ENCODE measurements at regions of chr22 and their contacts with region 1.

Region 1: DNA sequence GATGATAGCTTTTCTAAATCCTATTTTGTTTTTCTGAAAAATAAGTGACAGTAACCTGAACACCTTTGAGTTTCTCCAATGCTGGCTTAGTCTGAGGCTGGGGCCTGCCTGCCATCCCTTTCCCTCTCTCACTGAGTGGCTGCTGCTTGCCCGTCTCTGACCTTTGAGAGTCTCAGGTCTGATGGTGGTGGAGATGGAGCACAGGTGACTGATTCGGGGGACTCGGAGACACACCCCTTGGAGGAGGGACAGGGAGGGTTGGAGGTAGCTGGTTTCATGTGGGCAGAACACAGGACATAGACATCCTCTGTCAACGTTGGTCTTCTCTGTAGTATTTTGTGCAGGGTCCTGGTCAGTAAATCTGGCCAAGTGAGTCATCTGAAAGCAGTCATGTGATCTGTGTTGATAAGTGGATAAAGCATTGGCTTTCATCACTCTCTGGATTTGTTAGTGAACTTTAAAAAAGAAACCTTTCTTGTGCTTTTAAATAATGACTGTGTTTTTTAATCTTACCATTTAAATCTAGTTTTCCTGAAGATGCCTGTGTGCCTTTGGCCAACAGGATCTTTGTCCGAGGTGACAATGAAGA is 47.1 kb upstream of the CLDN5 start:
- DNase-seq: no peak
- ATAC-seq: no peak
- H3K4me3 ChIP-seq: no peak overlapping the region
- H3K27ac ChIP-seq: peak overlapping the region; percentile 46
- H3K4me1 ChIP-seq: no peaks in the 10 kb centered on the region
- H3K27me3 ChIP-seq: no peaks in the 10 kb centered on the region
- CTCF ChIP-seq: no peak

Region 2: DNA sequence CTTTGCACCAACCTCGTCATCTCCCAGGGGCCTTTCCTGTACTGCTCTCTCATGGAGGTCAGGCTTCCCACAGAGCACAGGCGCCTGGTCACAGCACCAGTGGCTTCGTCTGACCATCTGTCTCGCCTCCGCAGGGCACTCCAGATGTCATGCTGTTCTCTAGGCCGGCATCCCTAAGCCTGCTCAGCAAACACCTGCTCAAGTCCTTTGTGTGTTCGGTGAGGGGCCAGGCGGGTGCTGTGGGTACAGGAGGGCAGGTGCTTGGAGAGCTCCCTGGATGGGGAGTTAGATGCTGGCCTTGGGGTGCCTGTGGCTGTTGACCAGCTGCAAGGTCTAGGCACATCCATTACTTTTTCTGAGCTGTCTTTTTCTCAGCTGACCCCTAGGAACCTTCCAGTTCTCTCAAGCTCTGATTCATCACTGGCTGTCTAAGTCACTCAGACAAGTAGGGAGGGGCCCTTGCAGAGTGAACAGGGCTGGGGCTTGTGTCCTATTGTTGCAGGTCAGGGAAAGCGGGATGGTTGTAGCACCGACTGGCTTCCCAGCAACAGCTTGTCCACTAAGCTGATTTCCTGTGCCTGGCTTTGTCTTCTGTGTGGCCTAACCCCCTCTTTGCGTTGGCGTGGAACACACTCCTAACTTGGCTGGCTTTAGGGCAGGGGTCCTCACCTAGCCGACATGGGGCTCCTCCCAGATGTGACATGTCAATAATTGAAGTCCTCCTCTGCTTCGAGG is 56.3 kb before region 1 on chr22:
- intact Hi-C with region 1: loop called in 1 of 2 experiments (anchors 5 kb)
- DNase-seq: no peak
- ATAC-seq: peak in 2 of 4 donors; percentile 20 to 65
- H3K4me3 ChIP-seq: no peak overlapping the region
- H3K27ac ChIP-seq: no peak overlapping the region
- H3K4me1 ChIP-seq: no peaks in the 10 kb centered on the region
- H3K27me3 ChIP-seq: peaks cover 0 to 1% (median 0%) of the 10 kb centered on the region in 3 donors
- CTCF ChIP-seq: no peak